ENCODE measurements at regions of chr5 and their contacts with region 1.

Region 1: GRCh38 chr5:154972476-154973080 is 31.7 kb downstream of the MRPL22 start:
- DNase-seq: peak in 1 of 2 experiments; percentile 24
- H3K4me3 ChIP-seq: no peak overlapping the region
- H3K27ac ChIP-seq: no peak overlapping the region
- H3K4me1 ChIP-seq: peaks cover 6% of the 10 kb centered on the region; the same call in 1 of the 2 replicates
- H3K27me3 ChIP-seq: no peaks in the 10 kb centered on the region
- CTCF ChIP-seq: peak; percentile 78

Region 2: GRCh38 chr5:155004138-155004744 is 31.7 kb after region 1 on chr5:
- CTCF ChIA-PET with region 1: interaction called, 14 read pairs
- POLR2A ChIA-PET with region 1: no interaction called
- intact Hi-C with region 1: no loop called
- DNase-seq: peak in 1 of 2 experiments; percentile 38
- H3K4me3 ChIP-seq: no peak overlapping the region
- H3K27ac ChIP-seq: no peak overlapping the region
- H3K4me1 ChIP-seq: no peaks in the 10 kb centered on the region
- H3K27me3 ChIP-seq: peaks cover 10% of the 10 kb centered on the region; the same call in 1 of the 2 replicates
- CTCF ChIP-seq: peak; percentile 74

Measured in PC-9 (cell line).